Psoas muscle (tissue), 8 donors: ENCODE measurements at regions of chr22 and their contacts with region 1.

Region 1: DNA sequence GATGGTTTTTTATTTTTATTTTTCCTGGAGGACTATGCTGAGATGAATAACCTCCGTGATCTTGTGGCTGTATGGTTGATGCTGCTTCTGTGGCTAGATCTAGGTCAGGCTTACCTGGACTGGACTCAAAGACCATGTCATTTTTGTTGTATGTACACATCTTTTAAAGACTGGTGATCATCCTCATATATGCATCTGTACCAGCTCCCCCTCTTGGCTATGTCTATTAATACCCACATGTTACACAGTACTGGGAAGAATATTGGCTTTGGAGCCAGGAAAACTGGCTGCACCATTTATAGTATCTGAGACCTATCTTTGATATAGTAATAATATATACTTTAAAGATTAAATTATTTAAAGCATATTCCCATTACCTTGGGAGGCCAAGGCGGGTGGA is 18.4 kb upstream of the PITPNB start:
- DNase-seq: no peak
- ATAC-seq: no peak
- H3K4me3 ChIP-seq: no peak overlapping the region
- H3K27ac ChIP-seq: no peak overlapping the region
- H3K4me1 ChIP-seq: no peaks in the 10 kb centered on the region
- H3K27me3 ChIP-seq: no peaks in the 10 kb centered on the region
- CTCF ChIP-seq: no peak

Region 2: DNA sequence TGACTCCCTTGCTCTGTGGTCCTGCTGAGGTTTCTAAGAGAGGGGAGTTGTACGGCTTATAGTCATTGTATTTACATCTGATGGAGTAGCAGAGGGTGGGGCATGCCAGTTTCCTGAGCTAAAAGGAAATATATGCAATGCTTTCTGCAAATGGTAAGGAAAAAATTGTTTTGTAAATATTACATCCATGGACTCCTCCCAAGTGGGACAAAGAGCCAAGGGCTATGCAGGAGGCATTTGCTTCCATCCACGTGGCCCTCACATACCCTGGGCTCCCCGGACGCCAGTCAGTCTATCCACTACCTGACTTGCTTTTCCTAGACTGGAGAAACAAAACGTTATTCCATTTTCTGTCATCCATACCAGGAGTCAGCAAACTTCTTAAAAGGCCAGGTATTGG is 41.3 kb after region 1 on chr22:
- intact Hi-C with region 1: loop called in 1 of 2 experiments (anchors 1 kb)
- DNase-seq: no peak
- ATAC-seq: no peak
- H3K4me3 ChIP-seq: no peak overlapping the region
- H3K27ac ChIP-seq: no peak overlapping the region
- H3K4me1 ChIP-seq: no peaks in the 10 kb centered on the region
- H3K27me3 ChIP-seq: no peaks in the 10 kb centered on the region
- CTCF ChIP-seq: no peak